Ovary (tissue), 10 donors: ENCODE measurements at regions of chr4 and their contacts with region 1.

Region 1: DNA sequence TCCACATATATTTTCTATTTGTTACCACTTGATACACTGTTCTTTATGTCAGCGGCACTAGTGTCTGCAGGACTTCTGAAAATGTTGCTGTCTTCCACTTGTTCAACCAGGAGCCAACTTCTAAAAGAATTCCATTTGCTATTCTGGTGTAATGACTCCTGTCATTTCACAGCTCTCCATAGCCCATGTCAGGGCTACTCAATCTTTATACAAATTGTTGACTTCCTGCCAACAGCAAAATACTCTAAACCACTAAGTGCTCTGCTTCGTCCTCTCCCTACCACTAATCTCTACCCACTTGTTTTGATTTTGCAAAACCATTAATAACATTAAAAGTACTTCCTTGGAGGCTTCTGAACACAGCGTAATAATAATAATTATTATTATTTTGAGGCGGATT is 7.2 kb downstream of the CTSO start:
- DNase-seq: no peak
- H3K4me3 ChIP-seq: no peak overlapping the region
- H3K27ac ChIP-seq: no peak overlapping the region
- H3K4me1 ChIP-seq: no peaks in the 10 kb centered on the region
- H3K27me3 ChIP-seq: no peaks in the 10 kb centered on the region
- CTCF ChIP-seq: no peak
- EP300 ChIP-seq: no peak
- POLR2A ChIP-seq: no peak

Region 2: DNA sequence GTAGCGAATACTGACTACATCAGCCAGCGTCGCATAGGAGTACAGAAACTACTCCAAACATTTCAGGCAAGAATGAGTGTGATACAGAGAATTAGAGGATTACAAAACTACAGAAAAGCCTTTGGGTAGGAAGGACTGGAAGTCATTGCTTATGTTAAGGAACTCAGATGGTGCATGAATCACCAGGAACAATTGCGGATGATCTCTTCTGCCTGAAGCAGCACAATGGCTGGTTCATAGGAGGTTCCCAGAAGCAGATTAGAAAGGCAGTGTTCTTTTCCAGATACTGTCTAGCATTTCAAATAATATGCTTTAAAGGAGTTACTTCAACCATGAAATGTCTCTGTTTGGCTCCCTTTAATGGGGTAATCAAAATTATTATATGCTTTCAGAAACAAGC is 527.2 kb before region 1 on chr4:
- intact Hi-C with region 1: loop called in 1 of 4 experiments (anchors 10 kb)
- DNase-seq: no peak
- H3K4me3 ChIP-seq: no peak overlapping the region
- H3K27ac ChIP-seq: no peak overlapping the region
- H3K4me1 ChIP-seq: no peaks in the 10 kb centered on the region
- H3K27me3 ChIP-seq: no peaks in the 10 kb centered on the region
- CTCF ChIP-seq: no peak
- EP300 ChIP-seq: no peak
- POLR2A ChIP-seq: no peak

Region 3: DNA sequence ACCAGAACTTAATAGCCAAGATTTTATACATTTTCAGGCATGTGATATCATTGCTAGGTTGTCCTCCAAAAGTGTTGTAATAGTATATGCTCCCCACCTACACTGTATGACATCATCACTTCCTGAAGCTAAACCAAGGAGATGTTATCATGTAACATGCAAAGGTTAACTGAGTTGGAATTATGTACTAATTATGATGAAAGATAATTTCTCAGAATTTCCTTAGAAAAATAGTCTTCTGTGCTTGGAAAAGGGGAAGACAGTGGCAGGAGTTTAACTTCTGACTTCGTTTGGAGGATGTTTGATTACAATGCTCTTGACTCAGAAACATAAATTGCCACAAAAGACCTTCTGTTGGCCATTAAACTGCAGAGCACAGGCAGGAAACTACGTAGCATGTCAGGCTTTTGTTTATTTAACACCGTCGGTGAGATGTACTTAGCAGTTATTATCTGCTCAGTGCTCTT is 363.5 kb before region 1 on chr4:
- intact Hi-C with region 1: no loop called
- DNase-seq: no peak
- H3K4me3 ChIP-seq: no peak overlapping the region
- H3K27ac ChIP-seq: no peak overlapping the region
- H3K4me1 ChIP-seq: no peaks in the 10 kb centered on the region
- H3K27me3 ChIP-seq: no peaks in the 10 kb centered on the region
- CTCF ChIP-seq: no peak
- EP300 ChIP-seq: no peak
- POLR2A ChIP-seq: no peak

Region 4: GRCh38 chr4:155906554-155907247 is 39.8 kb before region 1 on chr4:
- intact Hi-C with region 1: no loop called
- DNase-seq: no peak
- H3K4me3 ChIP-seq: no peak overlapping the region
- H3K27ac ChIP-seq: no peak overlapping the region
- H3K4me1 ChIP-seq: no peaks in the 10 kb centered on the region
- H3K27me3 ChIP-seq: no peaks in the 10 kb centered on the region
- CTCF ChIP-seq: no peak
- EP300 ChIP-seq: no peak
- POLR2A ChIP-seq: no peak

Region 5: GRCh38 chr4:156422576-156422975 is 476.1 kb after region 1 on chr4:
- intact Hi-C with region 1: no loop called
- DNase-seq: no peak
- H3K4me3 ChIP-seq: no peak overlapping the region
- H3K27ac ChIP-seq: no peak overlapping the region
- H3K4me1 ChIP-seq: no peaks in the 10 kb centered on the region
- H3K27me3 ChIP-seq: no peaks in the 10 kb centered on the region
- CTCF ChIP-seq: no peak
- EP300 ChIP-seq: no peak
- POLR2A ChIP-seq: no peak

Region 6: GRCh38 chr4:156672492-156673305 is 726.2 kb after region 1 on chr4:
- intact Hi-C with region 1: no loop called
- DNase-seq: no peak
- H3K4me3 ChIP-seq: no peak overlapping the region
- H3K27ac ChIP-seq: no peak overlapping the region
- H3K4me1 ChIP-seq: peaks cover 2% of the 10 kb centered on the region
- H3K27me3 ChIP-seq: no peaks in the 10 kb centered on the region
- CTCF ChIP-seq: no peak
- EP300 ChIP-seq: no peak
- POLR2A ChIP-seq: no peak